ENCODE measurements at regions of chr1 and their contacts with region 1.

Region 1: DNA sequence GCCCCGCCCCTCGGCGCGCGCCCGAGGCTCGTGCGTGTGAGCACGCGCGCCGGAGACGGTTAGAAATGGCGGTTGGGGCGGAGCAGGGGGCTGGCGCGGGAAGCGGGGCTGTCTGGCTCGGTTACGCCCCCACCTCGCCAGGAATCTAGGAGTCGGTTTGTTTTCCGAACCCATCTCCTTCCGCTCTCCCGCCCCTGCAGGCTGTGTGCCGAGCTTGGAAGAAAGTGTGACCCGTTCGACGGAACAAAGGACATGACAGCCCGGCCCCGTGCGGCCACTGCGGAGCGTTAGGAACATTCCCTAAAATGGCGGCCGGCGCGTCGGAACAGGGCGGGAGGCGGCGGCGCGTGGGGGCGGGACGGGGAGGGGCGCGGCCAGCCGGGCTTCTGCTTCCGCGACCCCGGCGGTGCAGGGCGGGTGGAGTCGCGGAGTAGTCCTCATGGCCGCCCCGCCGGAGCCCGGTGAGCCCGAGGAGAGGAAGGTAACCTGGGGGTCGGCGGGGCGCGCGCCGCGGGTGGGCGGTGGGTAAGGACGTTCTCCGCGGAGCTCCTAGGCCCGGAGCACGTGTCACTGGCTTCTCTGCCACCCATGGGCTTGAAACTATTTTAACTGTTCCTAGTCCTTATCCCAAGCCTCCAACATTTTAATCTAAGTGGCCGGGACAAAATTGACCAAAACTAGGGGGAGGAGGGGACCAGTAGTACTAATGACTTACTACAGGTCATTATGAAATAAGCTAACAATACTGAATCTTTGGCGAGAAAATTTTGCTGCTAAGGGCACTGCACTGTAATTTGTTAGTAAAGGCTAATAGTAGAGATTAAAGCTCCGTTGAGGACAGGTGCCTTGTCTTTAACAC is at the start of gene COX20:
- DNase-seq: peak; percentile 88
- ATAC-seq: peak; percentile 75
- H3K4me3 ChIP-seq: peak within 1 kb of the TSS; percentile 73 to 98 (median 89)
- H3K27ac ChIP-seq: peak within 1 kb of the TSS; percentile 100
- H3K4me1 ChIP-seq: peaks cover 71% of the 10 kb centered on the region
- H3K27me3 ChIP-seq: no peaks in the 10 kb centered on the region; a peak in 1 of 5 replicates
- CTCF ChIP-seq: peak; percentile 15; the same call in 1 of the 2 replicates
- EP300 ChIP-seq: no peak; a peak in 1 of 4 replicates
- POLR2A ChIP-seq: peak; percentile 73 to 75; a peak in 3 of 4 replicates
- RAD21 ChIP-seq: peak; percentile 48
- total RNA-seq, gene COX20: 95.8 and 110 TPM in 2 replicates

Region 2: GRCh38 chr1:244451951-244452795 is 383.3 kb before region 1 on chr1:
- CTCF ChIA-PET with region 1: no interaction called
- POLR2A ChIA-PET with region 1: no interaction called
- in situ Hi-C with region 1: no loop called
- intact Hi-C with region 1: loop called (anchors 10 kb)
- DNase-seq: peak; percentile 97
- ATAC-seq: peak; percentile 97
- H3K4me3 ChIP-seq: peak overlapping the region; percentile 63 to 97 (median 90)
- H3K27ac ChIP-seq: peak overlapping the region; percentile 93
- H3K4me1 ChIP-seq: peaks cover 44% of the 10 kb centered on the region
- H3K27me3 ChIP-seq: no peaks in the 10 kb centered on the region; a peak in 2 of 5 replicates
- CTCF ChIP-seq: peak; percentile 61
- EP300 ChIP-seq: no peak; a peak in 1 of 4 replicates
- POLR2A ChIP-seq: peak in 1 of 2 experiments; percentile 11; a peak in 2 of 4 replicates
- RAD21 ChIP-seq: peak; percentile 68; the same call in 1 of the 2 replicates

Region 3: DNA sequence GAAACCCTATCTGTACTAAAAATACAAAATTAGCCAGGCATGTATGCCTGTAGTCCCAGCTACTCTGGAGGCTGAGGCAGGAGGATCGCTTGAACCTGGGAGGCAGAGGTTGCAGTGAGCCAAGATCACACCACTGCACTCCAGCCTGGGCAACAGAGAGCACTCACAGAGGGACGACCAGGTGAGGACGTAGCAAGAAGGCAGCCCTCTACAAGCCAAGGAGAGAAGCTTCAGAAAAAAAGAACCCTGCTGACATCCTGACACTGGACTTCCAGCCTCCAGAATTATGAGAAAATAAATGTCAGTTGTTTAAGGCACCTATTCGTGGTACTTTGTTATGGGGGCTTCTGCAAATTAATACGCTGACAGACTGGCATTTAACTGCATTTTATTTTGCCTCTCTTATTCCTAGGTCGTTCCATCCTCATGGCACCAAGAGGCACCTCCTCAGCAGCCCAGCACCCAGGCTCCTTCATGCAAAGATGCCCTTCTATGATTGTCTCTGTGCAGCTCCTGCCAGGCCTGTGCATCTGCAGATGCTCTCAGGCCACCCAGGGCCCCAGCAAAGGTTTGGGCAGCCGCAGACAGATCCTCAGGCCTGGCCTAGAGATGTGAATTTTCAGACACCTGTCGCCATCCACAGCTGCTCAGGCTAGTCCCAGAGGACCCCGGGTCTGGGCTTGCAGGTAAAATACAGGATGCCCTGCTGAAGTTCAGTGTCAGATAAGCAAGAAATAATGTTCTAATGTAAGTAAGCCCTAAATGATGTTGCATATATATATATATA is 86.1 kb before region 1 on chr1:
- CTCF ChIA-PET with region 1: no interaction called
- POLR2A ChIA-PET with region 1: no interaction called
- in situ Hi-C with region 1: no loop called
- intact Hi-C with region 1: no loop called
- DNase-seq: no peak
- ATAC-seq: no peak
- H3K4me3 ChIP-seq: no peak overlapping the region
- H3K27ac ChIP-seq: no peak overlapping the region
- H3K4me1 ChIP-seq: no peaks in the 10 kb centered on the region
- H3K27me3 ChIP-seq: peaks cover 1 to 25% of the 10 kb centered on the region in 2 experiments; a peak in 2 of 5 replicates
- CTCF ChIP-seq: no peak
- EP300 ChIP-seq: no peak
- POLR2A ChIP-seq: no peak
- RAD21 ChIP-seq: no peak

Region 4: DNA sequence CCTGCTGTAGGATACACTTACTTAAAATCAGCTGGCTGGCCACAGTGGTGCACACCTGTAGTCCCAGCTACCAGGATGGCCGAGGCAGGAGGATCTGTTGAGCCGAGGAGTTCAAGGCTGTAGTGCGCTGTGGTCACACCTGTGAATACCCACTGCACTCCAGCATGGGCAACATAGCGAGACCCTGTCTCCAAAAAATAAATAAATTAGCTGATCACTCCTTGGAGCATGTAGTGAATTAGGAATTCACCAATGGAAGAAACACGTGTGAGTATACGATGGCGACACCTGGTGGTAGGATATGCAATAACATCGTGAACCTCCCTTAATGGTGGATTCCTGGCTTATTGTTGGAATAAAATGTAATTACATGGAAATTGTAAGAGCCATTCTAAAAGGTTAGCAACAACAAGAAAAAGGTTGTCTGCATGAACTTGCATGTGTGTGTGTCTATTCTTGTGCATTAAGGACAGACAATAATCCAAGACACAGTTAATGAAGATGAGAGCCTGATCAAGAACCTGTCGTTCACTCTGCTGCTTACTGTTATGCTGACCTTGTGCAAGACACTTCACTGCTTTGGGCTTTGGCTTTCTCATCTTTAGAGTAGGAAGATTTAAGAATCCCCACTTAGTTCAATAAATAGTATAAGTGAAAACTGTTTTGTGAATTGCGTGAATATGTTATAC is 38.6 kb before region 1 on chr1:
- CTCF ChIA-PET with region 1: no interaction called
- POLR2A ChIA-PET with region 1: interaction called, 7 read pairs
- in situ Hi-C with region 1: no loop called
- intact Hi-C with region 1: loop called (anchors 1 kb)
- DNase-seq: peak; percentile 51
- ATAC-seq: peak; percentile 52
- H3K4me3 ChIP-seq: no peak overlapping the region
- H3K27ac ChIP-seq: no peak overlapping the region
- H3K4me1 ChIP-seq: peaks cover 30% of the 10 kb centered on the region
- H3K27me3 ChIP-seq: no peaks in the 10 kb centered on the region
- CTCF ChIP-seq: peak; percentile 89
- EP300 ChIP-seq: no peak
- POLR2A ChIP-seq: no peak
- RAD21 ChIP-seq: peak; percentile 30

Region 5: GRCh38 chr1:244851546-244852231 is 16.2 kb after region 1 on chr1:
- CTCF ChIA-PET with region 1: no interaction called
- POLR2A ChIA-PET with region 1: interaction called, 27 read pairs
- in situ Hi-C with region 1: no loop called
- intact Hi-C with region 1: no loop called
- DNase-seq: no peak
- ATAC-seq: no peak
- H3K4me3 ChIP-seq: no peak overlapping the region
- H3K27ac ChIP-seq: no peak overlapping the region
- H3K4me1 ChIP-seq: peaks cover 17% of the 10 kb centered on the region; the same call in 1 of the 2 replicates
- H3K27me3 ChIP-seq: no peaks in the 10 kb centered on the region
- CTCF ChIP-seq: no peak
- EP300 ChIP-seq: no peak
- POLR2A ChIP-seq: 0 out of 4 replicates have a peak, but pooled peaks of 1 of the 2 experiments have one; percentile 36
- RAD21 ChIP-seq: no peak

Region 6: DNA sequence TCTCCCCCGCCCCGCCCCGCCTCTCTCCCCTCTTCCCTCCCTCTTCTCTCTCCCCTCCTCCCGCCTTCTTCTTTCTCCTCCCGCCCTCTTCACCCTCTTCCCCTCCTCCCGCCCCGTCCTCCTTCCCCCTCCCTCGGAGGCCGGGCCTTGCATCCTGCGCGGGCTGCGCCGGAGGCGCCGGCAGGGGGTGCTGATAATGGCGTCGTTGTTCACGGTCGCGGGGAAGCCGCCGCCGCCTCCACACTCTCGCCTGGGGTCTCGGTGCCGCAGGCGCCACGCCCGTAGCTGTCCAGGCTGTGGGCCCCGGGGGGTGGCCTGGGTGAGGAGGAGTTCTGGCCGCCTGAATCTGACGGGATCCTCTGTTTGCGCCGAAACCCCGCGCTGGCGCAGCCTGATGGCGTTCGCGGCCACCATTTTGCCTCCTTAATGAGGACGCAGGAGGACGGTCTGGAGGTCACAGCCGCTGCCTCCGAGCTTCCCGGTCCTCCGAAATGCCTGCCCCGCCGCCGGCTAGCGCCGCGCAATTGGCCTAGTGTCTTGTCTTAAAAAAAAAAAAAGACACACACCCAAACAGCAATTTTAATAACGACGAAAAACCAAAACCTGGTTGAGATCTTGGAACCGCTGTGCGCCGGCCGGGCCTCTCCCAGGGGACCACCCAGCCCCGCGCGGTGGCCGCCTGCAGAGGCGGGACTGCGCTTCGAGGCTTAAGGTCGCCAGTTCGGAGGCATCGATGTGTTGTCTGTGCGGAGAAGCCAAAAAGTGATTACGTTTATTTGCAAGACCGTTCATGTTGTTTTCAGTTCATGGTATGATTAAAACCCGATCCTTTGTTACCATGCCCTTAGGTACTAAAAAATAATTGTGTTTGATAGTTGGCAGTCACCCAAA is 135.4 kb after region 1 on chr1:
- CTCF ChIA-PET with region 1: no interaction called
- POLR2A ChIA-PET with region 1: interaction called, 18 read pairs
- in situ Hi-C with region 1: no loop called
- intact Hi-C with region 1: no loop called
- DNase-seq: peak; percentile 91
- ATAC-seq: peak; percentile 79
- H3K4me3 ChIP-seq: peak overlapping the region; percentile 66 to 80 (median 75)
- H3K27ac ChIP-seq: peak overlapping the region; percentile 98
- H3K4me1 ChIP-seq: peaks cover 25% of the 10 kb centered on the region
- H3K27me3 ChIP-seq: no peaks in the 10 kb centered on the region; a peak in 1 of 5 replicates
- CTCF ChIP-seq: peak; percentile 82
- EP300 ChIP-seq: no peak; a peak in 2 of 4 replicates
- POLR2A ChIP-seq: peak; percentile 68 to 87; a peak in 3 of 4 replicates
- RAD21 ChIP-seq: peak; percentile 73

Measured in HepG2 (cell line).